Brain microvascular endothelial cell (primary cell): ENCODE measurements at regions of chr3 and their contacts with region 1.

Region 1: DNA sequence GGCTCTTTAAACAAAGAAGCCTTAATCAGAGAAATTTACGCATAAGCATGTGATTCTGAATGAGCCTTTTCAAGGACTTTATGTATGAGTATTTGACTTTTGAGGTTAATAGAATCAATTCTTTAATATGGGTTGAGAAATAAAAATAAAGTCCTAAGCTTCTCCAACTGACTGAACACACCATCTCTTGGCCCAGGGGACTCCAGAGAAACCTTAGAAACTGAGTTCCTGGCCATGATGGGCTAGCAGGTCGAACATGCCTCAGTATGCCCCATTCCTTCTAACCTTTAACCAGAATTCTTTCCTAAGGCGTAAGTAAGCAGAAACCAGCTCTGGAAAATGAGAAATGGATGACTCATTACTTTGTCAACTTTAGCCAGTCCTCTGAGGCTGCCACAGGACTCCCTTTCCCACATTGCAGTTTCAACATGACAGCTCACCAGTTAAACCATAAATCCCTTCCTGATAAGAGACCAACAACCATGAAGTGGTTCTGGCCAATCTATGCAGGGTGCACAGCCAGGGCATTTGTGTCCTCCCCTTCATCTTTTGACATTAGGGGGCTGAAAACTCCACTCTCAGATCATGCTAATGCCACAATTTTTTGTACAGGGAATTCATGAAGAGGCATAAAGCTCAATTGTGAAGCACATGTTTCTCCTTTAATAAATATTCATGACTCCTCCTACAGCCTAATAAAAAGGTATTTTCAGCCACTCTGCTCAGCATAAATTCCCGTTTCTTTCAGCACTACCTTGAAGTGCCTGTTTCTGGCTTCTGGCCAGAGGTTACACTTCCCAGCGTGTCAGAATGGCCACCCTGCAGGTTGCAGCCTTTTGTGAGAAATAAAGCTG is 33.3 kb downstream of the TM4SF18 start:
- DNase-seq: peak; percentile 93
- H3K4me3 ChIP-seq: no peak overlapping the region
- H3K27ac ChIP-seq: peak overlapping the region; percentile 56
- H3K27me3 ChIP-seq: no peaks in the 10 kb centered on the region
- CTCF ChIP-seq: no peak

Region 2: GRCh38 chr3:148880681-148881080 is 419.5 kb before region 1 on chr3:
- in situ Hi-C with region 1: no loop called
- DNase-seq: no peak
- H3K4me3 ChIP-seq: no peak overlapping the region
- H3K27ac ChIP-seq: peak overlapping the region; percentile 4
- H3K27me3 ChIP-seq: no peaks in the 10 kb centered on the region
- CTCF ChIP-seq: peak; percentile 44

Region 3: DNA sequence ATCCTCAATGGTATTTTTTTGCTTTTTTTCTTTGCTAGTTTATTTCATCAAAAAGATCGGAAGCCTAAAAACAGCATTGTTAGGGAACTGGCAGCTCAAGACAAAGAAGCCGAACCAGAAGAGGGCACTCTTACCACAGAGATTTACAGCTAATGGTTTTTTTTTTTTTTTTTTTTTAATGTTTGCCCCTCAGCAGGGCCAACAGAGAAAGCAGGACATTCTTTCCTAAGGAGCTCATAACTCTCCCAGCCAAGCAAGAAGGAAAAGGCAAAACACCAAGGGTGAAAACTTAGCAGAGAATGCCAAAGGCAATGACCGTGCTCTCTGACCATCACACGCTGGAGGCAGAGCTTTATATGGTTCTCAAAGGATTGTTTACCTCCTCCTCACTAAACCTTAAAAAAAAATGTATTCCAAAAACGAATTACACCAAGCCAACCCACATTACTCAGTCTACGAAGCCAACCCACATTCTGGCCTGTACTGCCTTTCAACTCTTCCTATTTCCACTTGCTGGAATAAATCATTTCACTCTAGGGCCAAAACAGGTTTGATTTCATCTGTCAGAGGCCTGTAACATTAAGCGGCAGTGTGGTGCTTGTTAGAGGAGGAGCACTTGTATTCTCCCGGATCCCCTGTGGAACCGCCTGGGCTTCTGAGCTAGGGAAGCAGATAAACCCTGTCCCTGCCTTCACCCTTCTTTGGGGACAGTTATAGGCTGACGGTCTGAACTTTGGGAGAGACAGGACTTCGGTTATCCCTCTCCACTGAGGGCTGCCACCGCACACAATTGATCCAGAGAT is 344.4 kb before region 1 on chr3:
- in situ Hi-C with region 1: loop called (anchors 25 kb)
- DNase-seq: peak; percentile 76
- H3K4me3 ChIP-seq: no peak overlapping the region
- H3K27ac ChIP-seq: peak overlapping the region; percentile 31
- H3K27me3 ChIP-seq: no peaks in the 10 kb centered on the region
- CTCF ChIP-seq: peak; percentile 78